Gastrocnemius medialis (tissue), 4 donors: ENCODE measurements at regions of chr13 and their contacts with region 1.

Region 1: GRCh38 chr13:31733066-31733465 is 6.3 kb upstream of the RXFP2 start:
- DNase-seq: no peak
- ATAC-seq: no peak
- H3K4me3 ChIP-seq: peak overlapping the region in 2 of 4 donors; percentile 14 to 24
- H3K27ac ChIP-seq: no peak overlapping the region
- H3K4me1 ChIP-seq: no peaks in the 10 kb centered on the region
- H3K27me3 ChIP-seq: no peaks in the 10 kb centered on the region
- CTCF ChIP-seq: no peak
- POLR2A ChIP-seq: no peak

Region 2: GRCh38 chr13:30268673-30269072 is 1464.4 kb before region 1 on chr13:
- in situ Hi-C with region 1: no loop called
- intact Hi-C with region 1: no loop called
- DNase-seq: no peak
- ATAC-seq: no peak
- H3K4me3 ChIP-seq: no peak overlapping the region
- H3K27ac ChIP-seq: no peak overlapping the region
- H3K4me1 ChIP-seq: no peaks in the 10 kb centered on the region
- H3K27me3 ChIP-seq: no peaks in the 10 kb centered on the region
- CTCF ChIP-seq: no peak
- POLR2A ChIP-seq: no peak

Region 3: DNA sequence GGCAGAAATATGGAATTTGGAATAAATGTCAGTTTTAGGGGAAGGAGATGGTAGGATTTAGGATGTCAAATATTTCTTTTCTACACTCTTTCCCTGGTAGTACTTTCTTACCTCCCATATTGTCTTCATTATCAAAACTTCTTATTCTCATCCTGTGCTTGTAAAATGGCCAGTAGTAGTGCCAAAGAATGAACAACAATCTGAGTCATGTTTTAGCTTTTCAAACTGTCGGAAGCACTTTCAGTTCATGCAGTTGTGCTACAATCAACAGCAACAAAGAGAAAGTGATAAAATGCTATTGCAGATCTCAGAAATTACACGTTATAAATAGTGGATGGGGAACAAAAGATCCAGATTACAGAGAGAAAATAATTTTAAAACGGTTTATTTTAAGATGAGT is 187.4 kb before region 1 on chr13:
- in situ Hi-C with region 1: loop called in 1 of 4 experiments (anchors 10 kb)
- intact Hi-C with region 1: no loop called
- DNase-seq: no peak
- ATAC-seq: no peak
- H3K4me3 ChIP-seq: no peak overlapping the region
- H3K27ac ChIP-seq: no peak overlapping the region
- H3K4me1 ChIP-seq: no peaks in the 10 kb centered on the region
- H3K27me3 ChIP-seq: no peaks in the 10 kb centered on the region
- CTCF ChIP-seq: no peak
- POLR2A ChIP-seq: no peak